ENCODE measurements at regions of chr1 and their contacts with region 1.

Region 1: GRCh38 chr1:85259118-85259911 is at the start of gene C1orf52:
- DNase-seq: peak; percentile 95 to 98 (median 96)
- ATAC-seq: peak; percentile 87
- H3K4me3 ChIP-seq: peak within 1 kb of the TSS; percentile 92 to 94
- H3K27ac ChIP-seq: peak within 1 kb of the TSS; percentile 59 to 84 (median 70)
- H3K4me1 ChIP-seq: peaks cover 70% of the 10 kb centered on the region
- H3K27me3 ChIP-seq: no peaks in the 10 kb centered on the region
- CTCF ChIP-seq: peak; percentile 96 to 100 (median 97)
- POLR2A ChIP-seq: peak in 2 of 3 donors; percentile 84 to 89
- total RNA-seq, gene C1orf52: 6.6 to 20.2 TPM

Region 2: GRCh38 chr1:85208488-85208887 is 50.8 kb before region 1 on chr1:
- intact Hi-C with region 1: loop called (anchors 5 kb)
- DNase-seq: no peak
- ATAC-seq: no peak
- H3K4me3 ChIP-seq: no peak overlapping the region
- H3K27ac ChIP-seq: no peak overlapping the region
- H3K4me1 ChIP-seq: no peaks in the 10 kb centered on the region
- H3K27me3 ChIP-seq: no peaks in the 10 kb centered on the region
- CTCF ChIP-seq: no peak
- POLR2A ChIP-seq: no peak